Left lung (tissue), 14 donors: ENCODE measurements at regions of chr15 and their contacts with region 1.

Region 1: GRCh38 chr15:90031231-90031791 is 30.2 kb downstream of the ZNF710 start:
- DNase-seq: peak in 1 of 4 donors; percentile 31
- ATAC-seq: no peak
- H3K4me3 ChIP-seq: no peak overlapping the region
- H3K27ac ChIP-seq: peak overlapping the region; percentile 40 to 92
- H3K4me1 ChIP-seq: peaks cover 30 to 89% of the 10 kb centered on the region in 2 donors
- H3K27me3 ChIP-seq: no peaks in the 10 kb centered on the region
- CTCF ChIP-seq: no peak

Region 2: DNA sequence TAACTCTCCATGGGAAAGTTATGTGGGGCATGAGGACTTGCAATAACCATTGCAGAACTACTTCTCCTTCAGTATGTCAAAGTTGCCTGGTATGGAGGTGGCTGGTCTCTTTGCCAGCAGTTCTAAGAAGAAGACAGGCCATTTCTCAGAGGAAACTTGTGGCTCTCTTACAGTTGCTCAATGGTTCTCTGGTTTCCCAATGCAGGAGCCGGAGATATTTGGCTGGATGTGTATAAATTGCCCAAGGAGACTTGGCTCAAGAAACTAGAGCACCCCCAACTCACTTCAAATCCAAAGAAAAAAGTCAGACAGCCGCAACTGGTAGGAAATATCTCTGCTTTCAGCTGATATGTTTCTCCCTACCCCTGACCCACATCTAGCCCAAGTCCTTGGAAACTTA is 316.5 kb before region 1 on chr15:
- intact Hi-C with region 1: no loop called
- DNase-seq: peak in 1 of 4 donors; percentile 24
- ATAC-seq: peak; percentile 21
- H3K4me3 ChIP-seq: no peak overlapping the region
- H3K27ac ChIP-seq: no peak overlapping the region
- H3K4me1 ChIP-seq: no peaks in the 10 kb centered on the region
- H3K27me3 ChIP-seq: no peaks in the 10 kb centered on the region
- CTCF ChIP-seq: no peak

Region 3: GRCh38 chr15:90064911-90065681 is 33.8 kb after region 1 on chr15:
- intact Hi-C with region 1: loop called in 1 of 2 experiments (anchors 5 kb)
- DNase-seq: peak in 2 of 4 donors; percentile 82 to 95
- ATAC-seq: peak; percentile 23
- H3K4me3 ChIP-seq: no peak overlapping the region
- H3K27ac ChIP-seq: peak overlapping the region; percentile 81 to 96
- H3K4me1 ChIP-seq: peaks cover 37 to 84% of the 10 kb centered on the region in 2 donors
- H3K27me3 ChIP-seq: no peaks in the 10 kb centered on the region
- CTCF ChIP-seq: no peak

Region 4: GRCh38 chr15:90191794-90192509 is 160.6 kb after region 1 on chr15:
- intact Hi-C with region 1: no loop called
- DNase-seq: peak in 3 of 4 donors; percentile 80 to 81 (median 80)
- ATAC-seq: peak; percentile 76
- H3K4me3 ChIP-seq: no peak overlapping the region
- H3K27ac ChIP-seq: peak overlapping the region; percentile 53
- H3K4me1 ChIP-seq: peaks cover 26 to 70% of the 10 kb centered on the region in 2 donors
- H3K27me3 ChIP-seq: no peaks in the 10 kb centered on the region
- CTCF ChIP-seq: no peak